Left colon (tissue), 2 donors: ENCODE measurements at regions of chrX and their contacts with region 1.

Region 1: GRCh38 chrX:10189317-10190268 is 32.8 kb downstream of the CLCN4 start:
- DNase-seq: peak; percentile 48 to 74
- ATAC-seq: peak; percentile 93

Region 2: DNA sequence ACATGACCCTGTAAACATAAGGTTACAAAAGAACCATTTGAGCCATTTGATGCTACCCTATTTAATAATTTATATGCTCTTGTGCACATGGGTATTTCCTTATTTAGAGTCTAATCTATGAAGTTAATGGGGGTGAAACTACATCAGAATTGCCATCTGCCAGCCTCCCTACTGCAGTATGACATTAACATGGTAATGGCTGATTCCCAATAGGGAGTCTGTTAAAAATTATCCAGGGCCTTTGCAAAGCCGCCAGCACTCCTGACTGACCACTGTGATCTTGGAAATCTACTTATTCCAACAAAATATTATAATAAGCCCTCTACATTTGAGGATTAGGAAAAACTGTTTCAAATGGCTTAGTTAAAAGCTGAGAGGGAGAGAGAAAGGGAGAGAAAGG is 120.9 kb after region 1 on chrX:
- intact Hi-C with region 1: no loop called
- DNase-seq: no peak
- ATAC-seq: no peak

Region 3: GRCh38 chrX:10615931-10616775 is 426.6 kb after region 1 on chrX:
- intact Hi-C with region 1: loop called in 1 of 2 experiments (anchors 10 kb)
- DNase-seq: peak in 1 of 2 donors; percentile 44
- ATAC-seq: peak; percentile 40

Region 4: GRCh38 chrX:10636337-10636736 is 446.7 kb after region 1 on chrX:
- intact Hi-C with region 1: loop called in 1 of 2 experiments (anchors 10 kb)
- DNase-seq: peak in 1 of 2 donors; percentile 18
- ATAC-seq: peak; percentile 85

Region 5: DNA sequence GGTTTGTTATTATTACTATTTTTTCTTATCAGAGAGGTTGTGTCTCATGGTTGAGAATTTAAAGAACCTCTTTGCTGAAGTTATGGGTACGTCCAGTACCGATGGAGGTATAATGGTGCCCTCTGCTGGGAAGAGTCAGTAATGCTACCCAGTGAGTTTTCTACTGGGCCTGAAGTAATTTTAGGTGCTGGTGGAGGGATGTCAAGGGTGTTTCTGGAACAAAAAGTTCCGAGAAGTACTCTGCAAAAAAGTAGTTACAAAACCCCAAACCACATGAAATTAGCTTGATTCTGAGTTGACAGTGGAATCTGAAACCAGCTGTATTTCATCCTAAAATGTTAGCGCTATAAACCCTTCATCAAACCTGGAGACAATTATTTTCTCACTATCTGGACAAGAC is 533.3 kb after region 1 on chrX:
- intact Hi-C with region 1: loop called in 1 of 2 experiments (anchors 10 kb)
- DNase-seq: peak; percentile 27 to 53
- ATAC-seq: peak; percentile 65

Region 6: GRCh38 chrX:11097933-11098332 is 908.3 kb after region 1 on chrX:
- intact Hi-C with region 1: loop called in 1 of 2 experiments (anchors 10 kb)
- DNase-seq: no peak
- ATAC-seq: peak; percentile 15